WTC11 (cell line): ENCODE measurements at regions of chr12 and their contacts with region 1.

Region 1: GRCh38 chr12:111812881-111813741 is 28.9 kb upstream of the MAPKAPK5 start:
- DNase-seq: peak; percentile 74
- ATAC-seq: peak; percentile 99
- H3K4me3 Mint-ChIP-seq: no peak overlapping the region
- H3K27ac Mint-ChIP-seq: no peak overlapping the region
- H3K4me1 Mint-ChIP-seq: no peaks in the 10 kb centered on the region
- H3K27me3 Mint-ChIP-seq: no peaks in the 10 kb centered on the region
- CTCF ChIP-seq: no peak; the same call in none of the 2 replicates

Region 2: DNA sequence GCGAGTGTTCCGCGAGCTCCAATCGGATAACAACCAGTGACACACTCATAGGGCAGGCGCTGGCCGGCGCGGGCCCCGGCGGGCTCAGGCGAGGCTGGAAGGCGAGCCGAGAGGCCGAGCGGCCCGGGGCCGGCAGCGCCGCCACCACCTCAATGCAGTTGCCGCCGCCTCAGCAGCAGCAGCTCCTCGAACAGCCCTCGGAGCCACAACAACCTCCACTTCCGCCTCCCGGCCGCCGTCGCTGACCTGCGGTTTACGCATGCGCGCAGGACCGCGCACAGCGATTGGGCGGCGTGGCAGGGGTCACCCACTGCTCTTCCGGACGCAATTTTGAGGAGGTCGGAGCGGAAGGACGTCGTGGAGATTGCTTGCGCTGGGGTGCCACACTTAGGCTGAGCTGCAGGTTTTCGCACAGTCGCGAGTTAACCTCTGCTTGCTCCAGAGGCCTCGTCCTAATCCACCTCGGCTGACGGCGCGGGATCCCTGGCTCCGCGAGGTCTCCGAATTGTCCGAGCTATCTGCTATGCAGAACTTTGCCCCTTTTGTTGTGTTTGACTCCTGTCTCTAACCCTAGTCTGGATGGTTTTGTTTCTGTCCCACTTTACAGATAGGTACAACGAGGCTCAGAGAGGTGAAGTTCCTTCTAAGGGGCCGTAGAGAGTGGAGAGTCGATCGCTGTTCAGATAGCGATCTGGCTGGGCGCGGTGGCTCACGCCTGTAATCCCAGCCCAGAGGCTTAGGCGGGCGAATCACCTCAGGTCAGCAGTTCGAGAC is 127.2 kb before region 1 on chr12 and contains the starts of genes ACAD10 and BRAP:
- CTCF ChIA-PET with region 1: interaction called, 10 read pairs
- POLR2A ChIA-PET with region 1: interaction called, 3 read pairs
- DNase-seq: peak; percentile 93
- ATAC-seq: peak; percentile 94
- H3K4me3 Mint-ChIP-seq: peak within 1 kb of the TSS; percentile 99
- H3K27ac Mint-ChIP-seq: peak within 1 kb of the TSS; percentile 95
- H3K4me1 Mint-ChIP-seq: peaks cover 26% of the 10 kb centered on the region
- H3K27me3 Mint-ChIP-seq: no peaks in the 10 kb centered on the region; the same call in 1 of the 2 replicates
- CTCF ChIP-seq: no peak
- total RNA-seq, gene ACAD10: 29.1 to 37.5 TPM (median 37.1 TPM) in 3 replicates
- total RNA-seq, gene BRAP: 17.3 to 18.3 TPM (median 18.1 TPM) in 3 replicates

Region 3: GRCh38 chr12:111748151-111748672 is 64.9 kb before region 1 on chr12:
- CTCF ChIA-PET with region 1: interaction called, 80 read pairs
- POLR2A ChIA-PET with region 1: interaction called, 7 read pairs
- DNase-seq: no peak
- ATAC-seq: no peak
- H3K4me3 Mint-ChIP-seq: no peak overlapping the region
- H3K27ac Mint-ChIP-seq: peak overlapping the region; percentile 17; the same call in 1 of the 2 replicates
- H3K4me1 Mint-ChIP-seq: no peaks in the 10 kb centered on the region
- H3K27me3 Mint-ChIP-seq: no peaks in the 10 kb centered on the region
- CTCF ChIP-seq: no peak

Region 4: GRCh38 chr12:111761099-111761498 is 52.0 kb before region 1 on chr12:
- CTCF ChIA-PET with region 1: interaction called, 19 read pairs
- POLR2A ChIA-PET with region 1: interaction called, 3 read pairs
- DNase-seq: no peak
- ATAC-seq: no peak
- H3K4me3 Mint-ChIP-seq: no peak overlapping the region
- H3K27ac Mint-ChIP-seq: peak overlapping the region; percentile 79; the same call in 1 of the 2 replicates
- H3K4me1 Mint-ChIP-seq: peaks cover 25% of the 10 kb centered on the region
- H3K27me3 Mint-ChIP-seq: peaks cover 12% of the 10 kb centered on the region
- CTCF ChIP-seq: no peak

Region 5: DNA sequence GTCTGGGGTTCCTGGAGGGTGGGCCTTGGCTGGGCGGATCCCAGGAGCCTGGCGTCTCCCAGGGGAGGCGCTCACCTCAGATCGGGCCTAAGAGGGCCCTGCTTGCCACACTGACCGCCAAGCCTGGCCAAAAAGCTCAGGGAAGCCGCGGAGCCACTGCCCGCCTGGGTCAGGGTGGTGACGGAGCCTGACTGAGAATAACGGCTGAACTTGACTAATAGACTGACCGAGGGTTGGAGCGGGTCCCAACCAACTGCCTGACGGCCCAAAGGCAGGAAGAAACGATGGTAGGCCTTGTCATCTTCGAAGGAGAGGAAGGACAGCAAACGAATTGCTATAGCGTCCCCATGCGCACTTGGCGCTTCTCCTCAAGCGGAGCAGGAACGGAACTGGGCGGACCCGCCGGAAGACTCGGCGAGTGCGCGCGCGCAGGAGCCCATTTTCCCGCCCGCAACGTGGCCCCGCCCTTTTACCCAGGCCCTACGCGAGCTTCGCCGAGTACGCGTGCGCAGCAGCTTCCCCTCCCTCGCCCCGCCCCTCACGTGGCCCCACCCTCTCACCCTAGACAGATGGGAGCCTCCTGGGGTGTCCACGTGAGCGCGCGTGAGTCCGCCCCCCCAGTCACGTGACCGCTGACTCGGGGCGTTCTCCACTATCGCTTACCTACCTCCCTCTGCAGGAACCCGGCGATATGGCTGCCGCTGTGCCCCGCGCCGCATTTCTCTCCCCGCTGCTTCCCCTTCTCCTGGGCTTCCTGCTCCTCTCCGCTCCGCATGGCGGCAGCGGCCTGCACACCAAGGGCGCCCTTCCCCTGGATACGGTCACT is 199.9 kb after region 1 on chr12 and contains the starts of genes ERP29 and TMEM116:
- CTCF ChIA-PET with region 1: interaction called, 10 read pairs
- POLR2A ChIA-PET with region 1: interaction called, 3 read pairs
- DNase-seq: peak; percentile 100
- ATAC-seq: peak; percentile 86
- H3K4me3 Mint-ChIP-seq: peak within 1 kb of the TSS; percentile 90
- H3K27ac Mint-ChIP-seq: peak within 1 kb of the TSS; percentile 100
- H3K4me1 Mint-ChIP-seq: peaks cover 22% of the 10 kb centered on the region
- H3K27me3 Mint-ChIP-seq: no peaks in the 10 kb centered on the region
- CTCF ChIP-seq: no peak
- total RNA-seq, gene ERP29: 162 to 171 TPM (median 168 TPM) in 3 replicates
- total RNA-seq, gene TMEM116: 7.8 to 10.5 TPM (median 9.4 TPM) in 3 replicates

Region 6: DNA sequence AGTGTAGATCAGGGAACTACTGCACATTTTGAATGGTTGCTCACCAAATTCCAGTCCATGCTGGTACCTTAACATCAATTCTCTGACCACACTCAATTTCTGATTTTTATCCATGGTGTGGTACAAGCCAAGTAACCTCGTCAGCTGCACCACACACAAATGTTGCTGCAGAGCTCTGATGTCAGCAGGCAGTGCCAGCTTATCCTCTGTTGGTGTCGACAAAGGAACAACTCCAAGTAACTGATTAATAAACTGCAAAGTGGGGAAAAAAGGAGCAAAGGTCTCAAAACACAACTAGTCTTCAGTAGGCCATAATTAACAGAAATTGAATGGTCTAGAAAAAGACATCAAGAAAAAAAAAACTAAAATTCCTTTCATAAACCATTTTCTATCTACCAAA is 248.0 kb after region 1 on chr12:
- CTCF ChIA-PET with region 1: no interaction called
- POLR2A ChIA-PET with region 1: no interaction called
- DNase-seq: no peak
- ATAC-seq: no peak
- H3K4me3 Mint-ChIP-seq: no peak overlapping the region
- H3K27ac Mint-ChIP-seq: no peak overlapping the region
- H3K4me1 Mint-ChIP-seq: no peaks in the 10 kb centered on the region
- H3K27me3 Mint-ChIP-seq: no peaks in the 10 kb centered on the region
- CTCF ChIP-seq: no peak

Region 7: DNA sequence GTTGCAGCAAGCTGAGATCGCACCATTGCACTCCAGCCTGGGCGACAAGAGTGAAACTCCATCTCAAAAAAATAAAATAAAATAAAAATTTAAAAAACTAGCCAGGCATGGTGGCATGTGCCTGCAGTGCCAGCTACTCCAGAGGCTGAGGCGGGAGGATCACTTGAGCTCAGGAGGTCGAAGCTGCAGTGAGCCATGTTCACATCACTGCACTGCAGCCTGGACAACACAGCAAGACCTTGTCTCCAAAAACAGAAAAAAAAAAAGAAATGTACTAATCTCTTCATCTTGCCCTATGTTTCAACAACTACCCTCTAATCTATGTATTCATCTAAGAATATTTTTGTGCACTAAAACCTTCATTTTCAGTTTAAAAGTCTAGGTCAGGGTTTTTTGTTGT is 289.0 kb after region 1 on chr12:
- CTCF ChIA-PET with region 1: no interaction called
- POLR2A ChIA-PET with region 1: no interaction called
- DNase-seq: no peak
- ATAC-seq: no peak
- H3K4me3 Mint-ChIP-seq: no peak overlapping the region
- H3K27ac Mint-ChIP-seq: no peak overlapping the region
- H3K4me1 Mint-ChIP-seq: peaks cover 33% of the 10 kb centered on the region
- H3K27me3 Mint-ChIP-seq: no peaks in the 10 kb centered on the region
- CTCF ChIP-seq: no peak